ENCODE measurements at regions of chr17 and their contacts with region 1.

Region 1: DNA sequence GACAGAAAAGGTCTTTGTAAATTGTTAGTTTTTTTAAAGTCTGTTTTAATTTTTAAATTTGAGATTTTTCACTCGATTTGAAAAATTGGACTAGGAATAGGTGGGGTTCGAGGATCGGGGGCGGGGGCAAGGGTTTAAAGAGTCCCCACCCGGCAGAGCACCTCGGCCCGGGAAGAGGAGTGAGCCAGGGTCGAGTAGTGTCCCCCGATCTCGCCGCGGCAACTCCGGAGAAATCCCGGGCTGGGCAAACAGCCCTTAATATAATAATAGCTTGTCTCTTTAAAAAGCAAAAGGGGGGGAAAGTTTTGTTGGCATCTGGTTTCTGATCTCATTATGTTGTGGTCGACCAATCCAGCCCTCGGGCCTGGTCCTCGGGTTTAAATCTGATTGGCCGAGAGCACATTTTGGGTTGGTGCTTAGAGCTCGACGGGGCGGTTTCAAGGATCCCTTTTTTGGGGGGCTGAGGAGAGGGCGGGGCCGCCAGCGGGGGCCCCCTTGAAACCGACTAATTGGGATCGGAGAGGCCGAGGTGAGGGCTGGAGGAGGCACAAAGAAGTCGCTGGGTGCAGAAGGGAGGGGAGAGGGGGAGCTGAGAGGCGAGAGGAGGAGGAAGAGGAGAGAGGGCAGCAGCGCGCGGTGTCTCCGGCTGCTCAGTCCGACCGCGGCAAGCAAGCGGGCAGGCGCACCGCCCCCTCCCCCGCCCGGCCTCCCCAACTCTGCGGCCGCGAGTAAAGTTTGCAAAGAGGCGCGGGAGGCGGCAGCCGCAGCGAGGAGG is at the start of gene FZD2:
- DNase-seq: peak; percentile 96
- H3K4me3 ChIP-seq: peak within 1 kb of the TSS; percentile 76
- H3K27me3 ChIP-seq: no peaks in the 10 kb centered on the region
- CTCF ChIP-seq: no peak
- polyA plus RNA-seq, gene FZD2: 57.1 and 93.1 TPM in 2 replicates

Region 2: GRCh38 chr17:44199553-44200477 is 357.2 kb before region 1 on chr17 and contains the start of gene ATXN7L3:
- CTCF ChIA-PET with region 1: no interaction called
- POLR2A ChIA-PET with region 1: interaction called, 20 read pairs
- DNase-seq: peak; percentile 84
- H3K4me3 ChIP-seq: peak within 1 kb of the TSS; percentile 74
- H3K27me3 ChIP-seq: no peaks in the 10 kb centered on the region
- CTCF ChIP-seq: no peak
- polyA plus RNA-seq, gene ATXN7L3: 47.0 and 53.9 TPM in 2 replicates

Region 3: GRCh38 chr17:44438636-44439035 is 118.4 kb before region 1 on chr17:
- CTCF ChIA-PET with region 1: no interaction called
- POLR2A ChIA-PET with region 1: no interaction called
- DNase-seq: no peak
- H3K4me3 ChIP-seq: no peak overlapping the region
- H3K27me3 ChIP-seq: no peaks in the 10 kb centered on the region
- CTCF ChIP-seq: no peak

Region 4: GRCh38 chr17:44543213-44543904 is 13.7 kb before region 1 on chr17:
- CTCF ChIA-PET with region 1: interaction called, 16 read pairs
- POLR2A ChIA-PET with region 1: interaction called, 23 read pairs
- DNase-seq: peak; percentile 91
- H3K4me3 ChIP-seq: no peak overlapping the region
- H3K27me3 ChIP-seq: no peaks in the 10 kb centered on the region
- CTCF ChIP-seq: no peak

Region 5: DNA sequence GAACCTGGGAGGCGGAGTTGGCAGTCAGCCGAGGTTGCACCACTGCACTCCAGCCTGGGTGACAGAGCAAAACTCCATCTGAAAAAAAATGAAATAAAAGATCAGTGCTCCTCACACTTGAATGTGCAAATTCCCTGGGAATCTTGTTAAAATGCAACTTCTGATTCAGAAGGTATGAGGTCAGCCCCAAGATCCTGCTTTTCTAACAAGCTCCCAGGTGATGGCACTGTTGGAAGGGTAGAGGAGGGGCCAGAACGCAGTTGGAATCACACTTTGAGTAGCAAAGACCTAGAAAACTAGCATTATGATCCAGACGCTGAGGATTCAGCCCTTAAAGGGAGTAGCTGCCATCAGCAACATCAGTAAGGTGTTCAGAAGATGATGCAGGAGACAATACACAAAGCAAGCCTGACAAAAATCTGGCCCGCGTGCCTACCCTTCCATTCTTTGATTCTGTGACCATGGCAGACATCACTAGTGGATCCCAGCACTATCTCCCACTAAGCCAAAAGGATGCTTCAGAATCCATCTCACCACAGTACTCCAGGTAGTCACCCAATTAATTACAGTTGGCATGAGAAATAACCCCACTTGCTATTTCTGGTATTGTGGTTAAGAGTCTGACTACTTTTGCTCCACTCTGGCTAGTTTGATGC is 66.2 kb after region 1 on chr17:
- CTCF ChIA-PET with region 1: no interaction called
- POLR2A ChIA-PET with region 1: no interaction called
- DNase-seq: no peak
- H3K4me3 ChIP-seq: no peak overlapping the region
- H3K27me3 ChIP-seq: no peaks in the 10 kb centered on the region
- CTCF ChIP-seq: no peak